GM12878 (cell line): ENCODE measurements at regions of chr2 and their contacts with region 1.

Region 1: DNA sequence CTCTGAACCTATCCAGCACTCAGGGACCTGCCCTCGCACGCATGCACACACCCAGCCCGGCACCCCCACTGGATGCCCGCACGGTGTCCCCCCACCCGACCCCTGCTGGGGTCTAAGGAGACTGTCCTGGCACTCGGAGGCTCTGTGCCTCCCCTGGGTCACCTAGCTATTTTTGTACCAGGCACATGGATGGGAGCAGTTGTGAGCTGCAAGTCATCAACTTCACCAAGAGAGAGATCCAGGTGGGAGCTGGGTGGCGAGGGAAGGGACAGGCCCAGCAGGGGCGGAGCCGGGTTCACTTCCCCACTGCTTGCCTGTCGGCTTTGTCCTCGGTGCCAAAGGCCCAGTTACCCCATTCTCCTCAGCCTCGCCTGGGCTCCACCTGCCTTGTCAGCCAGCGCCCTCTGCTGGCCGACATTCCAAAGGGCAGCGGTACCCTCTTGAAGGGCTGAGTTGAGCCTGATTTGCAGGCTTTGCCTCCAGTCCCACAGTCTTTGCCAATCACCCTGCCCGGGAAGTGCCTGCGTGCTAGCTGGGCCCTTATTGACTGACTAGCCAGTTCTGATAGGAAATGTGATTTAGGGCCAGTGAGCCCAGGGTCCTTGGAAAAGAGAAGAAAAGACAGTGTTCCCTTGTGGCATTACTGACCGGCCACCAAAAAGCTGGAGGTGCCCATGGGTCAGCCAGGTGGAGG is 5.8 kb downstream of the NT5DC4 start:
- DNase-seq: peak; percentile 61
- ATAC-seq: peak; percentile 86
- H3K4me3 ChIP-seq: no peak overlapping the region
- H3K27ac ChIP-seq: peak overlapping the region; percentile 39; the same call in 1 of the 2 replicates
- H3K4me1 ChIP-seq: peaks cover 22% of the 10 kb centered on the region
- H3K27me3 ChIP-seq: no peaks in the 10 kb centered on the region
- CTCF ChIP-seq: peak; percentile 98 to 99 (median 99); a peak in 5 of 6 replicates
- EP300 ChIP-seq: no peak; a peak in 1 of 4 replicates
- POLR2A ChIP-seq: no peak
- RAD21 ChIP-seq: peak; percentile 100

Region 2: GRCh38 chr2:112584134-112584890 is 142.3 kb before region 1 on chr2 and contains the start of gene CHCHD5:
- CTCF ChIA-PET with region 1: interaction called, 40 read pairs
- POLR2A ChIA-PET with region 1: interaction called, 10 read pairs
- RAD21 ChIA-PET with region 1: interaction called, 28 read pairs
- SMC1A ChIA-PET with region 1: interaction called, 18 read pairs
- in situ Hi-C with region 1: no loop called
- intact Hi-C with region 1: no loop called
- DNase-seq: peak; percentile 81
- ATAC-seq: peak; percentile 91
- H3K4me3 ChIP-seq: peak within 1 kb of the TSS; percentile 89
- H3K27ac ChIP-seq: peak within 1 kb of the TSS; percentile 95
- H3K4me1 ChIP-seq: peaks cover 20% of the 10 kb centered on the region
- H3K27me3 ChIP-seq: no peaks in the 10 kb centered on the region
- CTCF ChIP-seq: peak in 1 of 3 experiments; percentile 21; a peak in 2 of 6 replicates
- EP300 ChIP-seq: no peak
- POLR2A ChIP-seq: peak; percentile 83
- RAD21 ChIP-seq: no peak
- polyA plus RNA-seq, gene CHCHD5: 65.1 to 85.6 TPM

Region 3: GRCh38 chr2:112636231-112636960 is 90.2 kb before region 1 on chr2:
- CTCF ChIA-PET with region 1: interaction called, 671 read pairs
- POLR2A ChIA-PET with region 1: interaction called, 28 read pairs
- RAD21 ChIA-PET with region 1: interaction called, 494 read pairs
- SMC1A ChIA-PET with region 1: interaction called, 455 read pairs
- in situ Hi-C with region 1: no loop called
- intact Hi-C with region 1: no loop called
- DNase-seq: no peak
- ATAC-seq: peak; percentile 94
- H3K4me3 ChIP-seq: no peak overlapping the region
- H3K27ac ChIP-seq: no peak overlapping the region
- H3K4me1 ChIP-seq: peaks cover 32% of the 10 kb centered on the region
- H3K27me3 ChIP-seq: peaks cover 0 to 2% of the 10 kb centered on the region in 2 experiments; a peak in 2 of 4 replicates
- CTCF ChIP-seq: no peak
- EP300 ChIP-seq: peak; percentile 72 to 86; a peak in 3 of 4 replicates
- POLR2A ChIP-seq: no peak
- RAD21 ChIP-seq: no peak

Region 4: DNA sequence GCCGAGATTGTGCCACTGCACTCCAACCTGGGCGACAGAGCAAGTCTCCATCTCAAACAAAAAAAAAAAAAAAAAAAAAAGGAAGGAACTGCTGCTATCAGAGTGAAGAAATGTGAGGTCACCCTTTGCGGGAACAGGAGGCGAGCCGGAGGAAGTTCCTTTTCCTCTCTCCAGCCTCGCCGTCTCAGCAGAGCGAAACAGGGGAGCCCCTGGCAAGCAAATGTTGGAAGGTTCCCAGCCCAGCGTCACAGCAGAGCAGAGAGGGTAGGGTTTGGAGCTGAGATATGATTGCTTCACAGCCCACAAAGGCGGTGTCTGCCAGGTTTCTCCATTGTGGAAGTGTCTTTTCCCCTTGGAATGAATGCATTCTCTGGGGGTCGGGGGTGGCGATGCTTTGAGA is 52.4 kb before region 1 on chr2:
- CTCF ChIA-PET with region 1: interaction called, 10 read pairs
- POLR2A ChIA-PET with region 1: interaction called, 7 read pairs
- RAD21 ChIA-PET with region 1: interaction called, 4 read pairs
- SMC1A ChIA-PET with region 1: interaction called, 10 read pairs
- in situ Hi-C with region 1: no loop called
- intact Hi-C with region 1: no loop called
- DNase-seq: no peak
- ATAC-seq: no peak
- H3K4me3 ChIP-seq: no peak overlapping the region
- H3K27ac ChIP-seq: no peak overlapping the region
- H3K4me1 ChIP-seq: no peaks in the 10 kb centered on the region
- H3K27me3 ChIP-seq: no peaks in the 10 kb centered on the region
- CTCF ChIP-seq: no peak
- EP300 ChIP-seq: no peak
- POLR2A ChIP-seq: no peak
- RAD21 ChIP-seq: no peak

Region 5: DNA sequence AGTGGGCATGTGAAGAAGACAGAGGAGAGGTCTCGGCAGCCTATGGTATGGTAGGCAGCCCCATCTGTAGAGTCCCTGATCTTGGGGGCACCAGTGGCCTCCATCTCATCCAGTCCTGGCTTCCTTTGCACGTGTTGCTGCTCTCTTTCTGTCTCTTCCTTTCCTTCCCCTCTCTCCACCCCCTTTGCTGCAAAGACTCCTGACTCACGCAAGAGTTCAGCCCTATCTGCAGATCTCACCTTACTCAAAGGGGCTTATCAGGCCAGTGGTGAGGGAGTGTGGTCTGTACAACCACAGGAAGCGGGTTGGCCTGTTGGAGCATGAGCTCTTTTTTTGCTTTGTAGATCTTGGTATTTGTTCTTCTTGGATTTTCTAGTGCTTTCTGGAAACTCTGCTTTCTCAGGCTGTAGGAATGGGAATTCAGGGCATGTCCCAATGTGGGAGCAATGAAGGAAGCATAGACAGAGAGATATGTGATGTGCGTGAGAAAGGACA is 20.4 kb before region 1 on chr2:
- CTCF ChIA-PET with region 1: interaction called, 102 read pairs
- POLR2A ChIA-PET with region 1: interaction called, 51 read pairs
- RAD21 ChIA-PET with region 1: interaction called, 143 read pairs
- SMC1A ChIA-PET with region 1: interaction called, 107 read pairs
- in situ Hi-C with region 1: no loop called
- intact Hi-C with region 1: no loop called
- DNase-seq: peak; percentile 64
- ATAC-seq: peak; percentile 63
- H3K4me3 ChIP-seq: no peak overlapping the region; the same call in 1 of the 2 replicates
- H3K27ac ChIP-seq: peak overlapping the region; percentile 94
- H3K4me1 ChIP-seq: peaks cover 53% of the 10 kb centered on the region
- H3K27me3 ChIP-seq: no peaks in the 10 kb centered on the region
- CTCF ChIP-seq: no peak
- EP300 ChIP-seq: no peak; a peak in 1 of 4 replicates
- POLR2A ChIP-seq: no peak
- RAD21 ChIP-seq: no peak

Region 6: DNA sequence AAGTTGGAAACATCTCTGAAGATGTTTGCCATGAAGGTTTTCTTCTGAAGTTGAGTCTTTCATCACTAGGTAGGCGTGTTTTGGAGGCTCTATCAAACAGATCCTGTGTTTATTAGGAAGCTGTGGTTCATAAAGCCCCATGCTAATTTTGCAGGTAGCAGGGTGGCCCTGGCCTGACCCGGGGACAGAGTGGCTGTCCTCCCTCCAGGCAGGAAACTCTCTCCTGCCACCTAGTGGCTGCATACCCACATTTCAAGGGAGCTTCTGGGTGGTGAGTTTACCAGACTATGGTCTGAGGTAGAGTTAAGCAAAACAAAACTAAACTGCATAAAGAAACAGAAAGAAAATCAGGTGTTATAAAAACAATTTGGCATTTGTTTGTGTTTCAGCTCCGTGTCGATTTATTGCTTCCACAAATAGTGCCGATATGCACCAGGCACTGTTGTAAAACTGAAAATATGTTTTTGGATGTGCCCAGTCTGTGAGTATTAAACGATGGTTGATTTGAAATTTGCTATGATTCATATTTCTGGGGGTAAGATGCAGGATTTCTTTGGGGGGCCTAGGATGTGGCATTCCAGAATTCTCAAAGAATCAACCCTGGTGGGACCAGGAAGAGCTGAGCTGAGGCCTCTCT is 158.3 kb after region 1 on chr2:
- CTCF ChIA-PET with region 1: interaction called, 48 read pairs
- POLR2A ChIA-PET with region 1: no interaction called
- RAD21 ChIA-PET with region 1: interaction called, 29 read pairs
- SMC1A ChIA-PET with region 1: interaction called, 38 read pairs
- in situ Hi-C with region 1: no loop called
- intact Hi-C with region 1: no loop called
- DNase-seq: peak; percentile 39
- ATAC-seq: peak; percentile 82
- H3K4me3 ChIP-seq: no peak overlapping the region
- H3K27ac ChIP-seq: no peak overlapping the region
- H3K4me1 ChIP-seq: peaks cover 32% of the 10 kb centered on the region
- H3K27me3 ChIP-seq: no peaks in the 10 kb centered on the region
- CTCF ChIP-seq: peak; percentile 92 to 93 (median 93)
- EP300 ChIP-seq: no peak
- POLR2A ChIP-seq: no peak
- RAD21 ChIP-seq: peak; percentile 94